ENCODE measurements at regions of chr17 and their contacts with region 1.

Region 1: GRCh38 chr17:40443583-40444327 is 505 bp downstream of the IGFBP4 start:
- DNase-seq: peak; percentile 79
- ATAC-seq: peak; percentile 83
- H3K4me3 Mint-ChIP-seq: peak overlapping the region; percentile 82
- H3K27ac Mint-ChIP-seq: peak overlapping the region; percentile 92
- H3K4me1 Mint-ChIP-seq: peaks cover 59% of the 10 kb centered on the region
- H3K27me3 Mint-ChIP-seq: peaks cover 2% of the 10 kb centered on the region

Region 2: DNA sequence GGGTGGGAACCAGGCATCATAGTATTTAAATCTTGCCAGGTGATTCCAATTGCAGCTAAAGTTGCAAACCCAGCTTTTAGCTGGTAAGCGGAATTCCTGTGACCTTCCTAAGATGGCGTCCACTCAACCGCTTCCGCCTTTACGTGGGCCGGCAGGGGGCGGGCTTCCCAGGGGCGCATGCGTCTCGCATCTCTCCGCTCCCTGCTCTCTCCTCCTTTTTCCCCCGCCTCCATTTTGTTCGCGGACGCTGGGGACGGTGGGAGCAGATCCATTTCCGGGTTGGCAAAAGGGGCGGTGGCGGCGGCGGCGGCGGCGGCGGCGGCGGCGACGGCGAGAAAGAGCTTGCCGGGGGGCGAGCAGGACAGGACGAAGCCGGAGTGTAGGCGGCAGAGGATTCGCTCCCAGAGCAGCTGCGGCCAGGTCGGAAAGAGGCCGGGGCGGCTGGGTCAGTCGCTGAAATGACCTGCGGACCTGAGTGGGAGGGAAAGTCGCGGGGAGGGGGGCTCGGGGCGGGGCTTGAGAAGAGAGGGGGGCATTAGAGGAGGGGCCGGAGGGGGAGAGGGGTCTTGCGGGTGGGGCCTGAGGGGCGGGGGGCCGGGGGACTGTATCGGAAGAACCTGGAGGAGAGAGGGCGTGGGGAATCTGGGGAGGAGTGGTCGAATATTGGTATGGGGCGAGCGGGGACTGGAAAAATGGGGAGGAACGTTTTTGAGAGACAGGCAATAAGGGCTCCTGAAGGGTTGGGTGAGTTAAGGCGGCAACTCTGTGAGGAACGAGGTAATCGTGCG is 224.5 kb before region 1 on chr17 and contains the start of gene WIPF2:
- CTCF ChIA-PET with region 1: no interaction called
- POLR2A ChIA-PET with region 1: no interaction called
- DNase-seq: peak; percentile 98
- ATAC-seq: peak; percentile 95
- H3K4me3 Mint-ChIP-seq: peak within 1 kb of the TSS; percentile 82
- H3K27ac Mint-ChIP-seq: peak within 1 kb of the TSS; percentile 99
- H3K4me1 Mint-ChIP-seq: peaks cover 22% of the 10 kb centered on the region
- H3K27me3 Mint-ChIP-seq: no peaks in the 10 kb centered on the region
- total RNA-seq, gene WIPF2: 22.0 to 27.4 TPM

Region 3: GRCh38 chr17:40427002-40427491 is 16.7 kb before region 1 on chr17:
- CTCF ChIA-PET with region 1: interaction called, 36 read pairs
- POLR2A ChIA-PET with region 1: interaction called, 5 read pairs
- DNase-seq: peak; percentile 63
- ATAC-seq: peak; percentile 93
- H3K4me3 Mint-ChIP-seq: peak overlapping the region; percentile 3
- H3K27ac Mint-ChIP-seq: peak overlapping the region; percentile 83
- H3K4me1 Mint-ChIP-seq: peaks cover 36% of the 10 kb centered on the region
- H3K27me3 Mint-ChIP-seq: peaks cover 11% of the 10 kb centered on the region

Region 4: DNA sequence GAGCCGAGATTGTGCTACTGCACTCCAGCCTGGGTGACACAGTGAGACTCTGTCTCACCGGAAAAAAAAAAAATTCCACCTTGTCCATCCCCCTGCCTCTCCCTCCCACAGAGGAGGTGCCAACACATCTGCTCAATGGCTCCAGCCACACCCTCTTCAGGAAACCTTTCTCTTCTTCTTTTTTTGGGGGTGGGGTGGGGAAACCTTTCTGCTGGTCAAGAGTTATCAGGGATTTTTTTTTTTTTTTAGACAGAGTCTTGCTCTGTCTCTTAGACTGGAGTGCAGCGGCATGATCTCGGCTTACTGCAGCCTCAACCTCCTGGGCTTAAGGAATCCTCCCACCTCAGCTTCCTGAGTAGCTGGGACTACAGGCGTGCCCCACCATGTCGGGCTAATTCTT is 39.0 kb after region 1 on chr17:
- CTCF ChIA-PET with region 1: no interaction called
- POLR2A ChIA-PET with region 1: no interaction called
- DNase-seq: no peak
- ATAC-seq: no peak
- H3K4me3 Mint-ChIP-seq: no peak overlapping the region
- H3K27ac Mint-ChIP-seq: peak overlapping the region; percentile 76
- H3K4me1 Mint-ChIP-seq: peaks cover 82% of the 10 kb centered on the region
- H3K27me3 Mint-ChIP-seq: no peaks in the 10 kb centered on the region

Region 5: GRCh38 chr17:40536295-40537171 is 92.8 kb after region 1 on chr17:
- CTCF ChIA-PET with region 1: interaction called, 78 read pairs
- POLR2A ChIA-PET with region 1: interaction called, 7 read pairs
- DNase-seq: no peak
- ATAC-seq: no peak
- H3K4me3 Mint-ChIP-seq: no peak overlapping the region
- H3K27ac Mint-ChIP-seq: peak overlapping the region; percentile 39
- H3K4me1 Mint-ChIP-seq: peaks cover 100% of the 10 kb centered on the region
- H3K27me3 Mint-ChIP-seq: no peaks in the 10 kb centered on the region